Activated T-helper 1 cell treated with anti-CD3 and anti-CD28 coated beads, Interleukin-12 subunit alpha, Interleukin-12 subunit beta, Interleukin-2, Interleukin-4 antibody, amounts not matched to agents 30 ng/mL and 10 ng/mL and 1 ng/mL, durations not matched to agents 14 hours and 24 hours and 36 hours (primary cell): ENCODE measurements at regions of chr20 and their contacts with region 1.

Region 1: GRCh38 chr20:60137629-60138245 is 179.5 kb downstream of the CDH26 start:
- DNase-seq: peak; percentile 5
- H3K4me3 Mint-ChIP-seq: peak overlapping the region; percentile 82
- H3K27ac Mint-ChIP-seq: no peak overlapping the region
- H3K4me1 Mint-ChIP-seq: peaks cover 7% of the 10 kb centered on the region
- H3K27me3 Mint-ChIP-seq: peaks cover 3% of the 10 kb centered on the region

Region 2: DNA sequence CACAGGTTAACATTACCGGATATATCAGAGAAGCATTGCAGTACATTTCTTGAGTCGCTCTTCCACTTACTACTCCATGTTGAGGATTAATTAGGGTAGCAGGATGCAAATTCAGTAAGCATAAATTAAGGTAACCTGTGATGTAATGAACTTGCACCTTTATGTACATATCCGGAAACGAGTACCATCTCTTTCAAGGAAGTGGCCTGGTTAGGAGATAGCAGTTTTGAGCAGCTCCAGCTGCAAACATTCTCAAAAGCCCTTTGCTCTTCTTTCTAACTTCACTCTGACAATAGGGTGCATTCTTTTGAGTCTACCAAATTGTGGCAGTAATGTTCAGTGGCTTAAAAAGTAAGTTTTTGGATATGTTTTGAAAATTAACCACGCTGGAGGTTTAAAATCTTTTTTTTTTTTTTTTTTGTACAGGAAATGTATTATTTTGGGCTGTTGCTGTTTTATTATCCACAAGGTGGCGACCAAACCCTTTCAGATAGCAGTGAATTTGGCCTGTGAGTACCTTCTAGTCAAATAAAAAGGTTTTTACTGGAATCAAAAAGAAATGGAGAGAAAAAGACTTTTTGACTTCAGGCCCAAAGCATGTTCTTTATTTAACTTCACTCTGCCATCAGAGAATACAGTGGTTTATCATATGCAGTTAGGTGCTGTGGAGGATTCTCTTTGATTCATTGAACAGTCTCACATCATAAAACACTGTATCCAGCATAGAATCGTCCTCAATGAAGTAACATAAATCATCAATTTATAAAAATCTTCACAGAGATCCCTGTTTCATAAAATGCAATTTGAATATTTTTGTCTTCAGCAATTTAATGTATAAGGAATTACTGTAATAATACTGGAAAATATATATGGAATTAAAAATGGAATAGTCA is 188.7 kb before region 1 on chr20:
- intact Hi-C with region 1: loop called (anchors 5 kb)
- DNase-seq: peak; percentile 21
- H3K4me3 Mint-ChIP-seq: peak overlapping the region; percentile 50
- H3K27ac Mint-ChIP-seq: peak overlapping the region; percentile 84
- H3K4me1 Mint-ChIP-seq: peaks cover 18% of the 10 kb centered on the region
- H3K27me3 Mint-ChIP-seq: no peaks in the 10 kb centered on the region

Region 3: GRCh38 chr20:60262967-60263603 is 125.3 kb after region 1 on chr20:
- intact Hi-C with region 1: loop called (anchors 1 kb)
- DNase-seq: peak; percentile 12
- H3K4me3 Mint-ChIP-seq: no peak overlapping the region
- H3K27ac Mint-ChIP-seq: no peak overlapping the region
- H3K4me1 Mint-ChIP-seq: no peaks in the 10 kb centered on the region
- H3K27me3 Mint-ChIP-seq: no peaks in the 10 kb centered on the region